Activated CD4-positive, alpha-beta T cell treated with anti-CD3 and anti-CD28 coated beads, Interleukin-2, amount 10 ng/mL, durations not matched to agents 7 days and 5 days (primary cell): ENCODE measurements at regions of chrX and their contacts with region 1.

Region 1: DNA sequence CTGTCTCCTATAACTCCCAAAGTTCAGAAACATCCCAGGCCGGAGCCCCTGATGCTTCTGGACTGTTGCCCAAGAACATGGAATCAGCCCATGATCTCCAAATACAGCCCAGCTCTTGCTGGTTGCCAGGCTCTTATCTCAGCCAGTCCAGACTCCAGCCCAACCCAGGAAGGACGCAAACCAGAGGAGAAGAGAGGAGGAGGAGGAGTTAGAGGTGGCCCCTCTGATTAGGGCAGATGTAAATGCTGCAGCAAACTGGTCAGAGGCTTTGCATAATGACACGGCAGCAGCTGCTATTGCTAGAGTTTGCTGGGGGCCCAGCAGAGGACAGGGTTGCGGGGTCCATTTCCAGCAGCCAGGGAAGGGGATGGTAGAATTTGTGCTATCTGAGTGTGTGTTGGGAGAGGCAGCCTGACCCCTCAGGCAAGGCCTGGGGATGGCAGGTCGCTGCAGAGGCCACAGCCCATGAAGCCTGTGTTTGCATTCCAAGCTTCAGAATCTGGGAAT is 4.2 kb upstream of the OTUD5 start:
- DNase-seq: no peak
- H3K4me3 Mint-ChIP-seq: no peak overlapping the region
- H3K27ac Mint-ChIP-seq: no peak overlapping the region
- H3K4me1 Mint-ChIP-seq: peaks cover 22% of the 10 kb centered on the region
- H3K27me3 Mint-ChIP-seq: no peaks in the 10 kb centered on the region

Region 2: DNA sequence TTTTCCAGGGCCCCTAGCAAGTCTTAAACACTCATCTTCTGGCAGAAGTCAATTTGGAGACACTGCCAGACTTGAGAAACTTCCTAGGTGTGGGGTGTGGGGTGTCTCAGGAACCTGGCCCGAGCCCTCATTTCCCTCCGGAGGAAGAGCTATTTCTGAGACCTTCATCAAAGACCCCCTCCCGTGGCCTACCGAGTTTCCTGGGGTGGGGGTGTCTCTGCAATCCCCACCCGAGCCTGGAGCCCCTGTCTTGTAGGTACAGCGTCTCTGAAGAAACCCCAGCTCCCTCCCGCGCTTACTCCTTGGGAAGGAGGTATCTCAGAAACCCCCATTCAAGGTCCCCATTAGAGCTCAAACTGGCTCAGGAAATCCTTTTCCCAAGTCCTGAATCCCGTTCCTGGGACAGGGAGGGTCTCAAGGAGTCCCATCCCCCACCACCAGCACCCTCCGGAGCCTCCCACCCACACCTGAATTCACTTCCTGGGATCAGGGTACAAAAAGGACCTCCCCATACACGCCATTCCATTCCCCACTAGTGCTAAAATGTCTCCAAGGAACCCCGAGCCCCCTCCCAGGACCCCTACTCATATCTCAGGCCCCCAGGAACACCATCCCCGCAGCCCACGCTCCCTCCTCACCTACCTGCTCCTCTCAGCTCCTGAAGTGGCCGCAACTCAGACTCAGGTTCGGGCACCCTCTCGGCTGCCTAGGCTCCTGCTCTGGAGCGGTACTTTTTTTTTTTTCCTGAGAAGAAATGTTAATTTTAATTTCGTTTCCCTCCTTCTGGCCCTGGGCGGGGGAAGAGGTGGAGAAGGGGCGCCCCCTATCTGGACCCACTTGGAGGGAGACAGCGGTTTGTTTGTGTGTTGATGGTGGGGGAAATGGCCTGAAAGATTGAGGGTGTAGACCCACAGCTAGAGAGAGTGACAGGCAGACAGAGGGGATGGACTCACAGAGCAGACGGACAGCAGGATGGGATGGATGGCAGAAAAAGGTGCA is 492.6 kb before region 1 on chrX:
- CTCF ChIA-PET with region 1: no interaction called
- POLR2A ChIA-PET with region 1: interaction called, 12 read pairs
- DNase-seq: peak; percentile 38
- H3K4me3 Mint-ChIP-seq: peak overlapping the region; percentile 90
- H3K27ac Mint-ChIP-seq: peak overlapping the region; percentile 95
- H3K4me1 Mint-ChIP-seq: peaks cover 48% of the 10 kb centered on the region
- H3K27me3 Mint-ChIP-seq: no peaks in the 10 kb centered on the region

Region 3: DNA sequence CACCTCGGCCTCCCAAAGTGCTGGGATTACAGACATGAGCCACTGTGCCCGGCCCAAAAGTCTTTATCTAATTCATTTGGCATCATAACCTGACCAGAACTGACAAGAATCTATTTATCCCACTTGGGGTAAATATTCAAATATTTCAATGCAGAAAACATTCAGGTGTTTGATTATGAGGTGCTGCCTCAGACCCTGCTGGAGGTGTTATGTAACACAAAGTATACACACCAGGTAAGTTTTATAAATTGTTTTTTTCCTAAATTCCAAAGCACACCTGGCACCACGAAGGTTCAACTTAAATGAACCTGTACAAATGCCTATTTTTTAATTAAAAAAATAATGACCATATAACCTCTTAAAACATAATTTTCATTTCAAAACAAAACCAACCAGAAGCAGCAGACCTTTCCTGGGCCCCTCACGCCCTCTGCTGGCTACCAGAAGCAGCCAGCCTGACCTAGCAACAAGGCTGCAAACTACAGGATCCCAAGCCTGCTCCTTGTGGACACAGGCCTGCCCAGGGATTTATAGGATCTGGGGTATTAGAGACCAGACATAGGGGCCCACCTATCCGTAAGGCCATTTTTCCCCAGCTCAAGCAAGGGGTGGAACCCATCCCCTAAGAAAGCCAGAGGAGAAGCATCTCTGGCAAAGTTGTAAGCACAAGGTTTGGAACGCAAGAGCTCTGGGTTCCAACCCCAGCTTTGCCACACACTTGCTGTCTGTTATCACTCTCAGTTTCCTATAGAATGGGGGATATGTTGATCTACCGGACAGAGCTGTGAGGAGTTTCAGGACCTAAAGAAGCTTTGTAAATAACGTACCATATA is 15.9 kb before region 1 on chrX:
- CTCF ChIA-PET with region 1: no interaction called
- POLR2A ChIA-PET with region 1: no interaction called
- DNase-seq: peak; percentile 58
- H3K4me3 Mint-ChIP-seq: no peak overlapping the region
- H3K27ac Mint-ChIP-seq: peak overlapping the region; percentile 73
- H3K4me1 Mint-ChIP-seq: peaks cover 57% of the 10 kb centered on the region
- H3K27me3 Mint-ChIP-seq: no peaks in the 10 kb centered on the region

Region 4: DNA sequence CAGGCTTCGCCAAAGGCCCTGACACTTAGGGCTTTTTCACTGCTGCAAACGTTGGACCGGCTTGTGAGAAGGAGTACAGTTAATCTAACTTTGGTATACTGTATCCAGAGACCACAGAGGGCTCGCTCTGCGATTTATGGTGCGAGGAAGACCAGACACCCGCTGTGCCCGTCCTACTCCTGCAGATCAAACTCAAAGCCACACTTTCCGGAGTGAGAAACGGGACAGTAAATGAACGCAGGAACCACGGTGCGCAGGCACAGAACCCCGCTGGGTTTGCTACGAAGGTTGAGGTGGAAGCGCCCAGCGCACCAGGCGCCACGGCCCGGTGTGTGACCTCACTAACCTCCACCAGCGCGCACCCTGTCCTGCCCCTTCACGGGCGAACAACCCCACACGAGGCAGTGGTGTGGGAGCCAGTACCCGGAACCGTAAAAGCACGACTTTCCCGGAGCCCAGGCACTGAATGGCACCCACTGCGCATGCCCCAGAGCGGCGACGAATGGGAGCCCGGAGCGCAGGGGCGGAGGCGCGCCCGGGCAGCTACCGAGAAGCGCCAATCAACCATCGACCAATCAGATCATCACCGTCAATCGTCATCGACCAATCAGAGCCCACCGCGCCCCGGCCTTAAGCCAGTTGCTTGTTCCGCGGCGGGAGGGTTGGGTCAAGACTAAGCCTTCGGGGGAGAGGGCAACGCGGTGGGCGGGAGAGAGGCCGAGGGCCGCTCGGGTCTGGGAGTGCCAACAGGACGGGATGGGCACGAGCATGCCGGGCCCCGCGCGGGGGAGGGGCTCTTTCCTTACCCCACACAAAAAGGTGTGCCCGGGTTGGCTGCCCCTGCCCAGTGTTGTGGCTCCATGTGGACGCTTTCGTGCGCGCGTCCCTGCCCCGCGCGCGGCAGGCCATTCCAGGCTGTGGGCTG is 139.3 kb after region 1 on chrX:
- CTCF ChIA-PET with region 1: no interaction called
- POLR2A ChIA-PET with region 1: no interaction called
- DNase-seq: peak; percentile 91
- H3K4me3 Mint-ChIP-seq: peak overlapping the region; percentile 86
- H3K27ac Mint-ChIP-seq: peak overlapping the region; percentile 94
- H3K4me1 Mint-ChIP-seq: peaks cover 15% of the 10 kb centered on the region
- H3K27me3 Mint-ChIP-seq: no peaks in the 10 kb centered on the region